ENCODE measurements at regions of chr10 and their contacts with region 1.

Region 1: DNA sequence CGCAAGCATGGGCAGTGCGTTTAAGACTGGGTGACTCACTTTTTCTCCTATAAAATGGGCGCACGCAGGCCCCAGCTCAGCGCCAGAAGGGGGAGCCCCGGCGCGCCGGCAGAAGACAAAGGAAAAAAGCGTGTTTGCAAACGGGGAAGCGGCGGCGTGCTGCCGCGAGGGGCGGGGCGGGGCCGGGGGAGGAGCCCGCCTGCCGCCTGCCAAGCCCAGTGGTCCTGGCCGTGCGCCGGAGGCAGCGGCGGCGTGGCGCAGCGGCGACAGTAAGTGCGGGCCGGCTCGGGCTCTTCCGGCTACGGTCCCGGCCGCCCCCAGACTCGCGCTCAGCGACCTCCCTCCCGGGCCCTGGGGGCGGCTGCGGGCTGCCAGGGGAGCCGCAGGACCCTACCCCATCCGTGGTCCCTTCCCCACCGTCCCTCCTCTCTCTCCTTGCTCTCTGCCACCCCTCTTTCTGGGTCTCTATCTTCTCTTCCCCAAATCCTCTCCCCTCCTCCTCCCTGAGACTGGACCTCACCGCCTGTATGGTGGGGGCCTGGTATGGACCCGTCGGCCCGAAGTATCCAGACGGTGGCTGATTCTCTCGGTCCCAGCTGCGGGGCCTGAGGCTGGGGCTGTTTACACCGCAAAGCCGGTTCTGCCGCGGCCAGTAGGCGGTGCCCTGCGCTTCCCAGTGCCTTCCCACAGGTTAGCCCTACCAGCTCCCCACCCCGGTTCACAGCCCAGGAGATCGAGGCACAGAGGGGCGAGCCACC is at the start of gene SLC29A3:
- DNase-seq: peak; percentile 74
- H3K4me3 ChIP-seq: peak within 1 kb of the TSS; percentile 50 to 57 (median 55)
- H3K27ac ChIP-seq: no peak within 1 kb of the TSS
- H3K4me1 ChIP-seq: peaks cover 6% of the 10 kb centered on the region
- H3K27me3 ChIP-seq: no peaks in the 10 kb centered on the region
- CTCF ChIP-seq: peak; percentile 54 to 90
- total RNA-seq, gene SLC29A3: 3.5 to 8.2 TPM

Region 2: DNA sequence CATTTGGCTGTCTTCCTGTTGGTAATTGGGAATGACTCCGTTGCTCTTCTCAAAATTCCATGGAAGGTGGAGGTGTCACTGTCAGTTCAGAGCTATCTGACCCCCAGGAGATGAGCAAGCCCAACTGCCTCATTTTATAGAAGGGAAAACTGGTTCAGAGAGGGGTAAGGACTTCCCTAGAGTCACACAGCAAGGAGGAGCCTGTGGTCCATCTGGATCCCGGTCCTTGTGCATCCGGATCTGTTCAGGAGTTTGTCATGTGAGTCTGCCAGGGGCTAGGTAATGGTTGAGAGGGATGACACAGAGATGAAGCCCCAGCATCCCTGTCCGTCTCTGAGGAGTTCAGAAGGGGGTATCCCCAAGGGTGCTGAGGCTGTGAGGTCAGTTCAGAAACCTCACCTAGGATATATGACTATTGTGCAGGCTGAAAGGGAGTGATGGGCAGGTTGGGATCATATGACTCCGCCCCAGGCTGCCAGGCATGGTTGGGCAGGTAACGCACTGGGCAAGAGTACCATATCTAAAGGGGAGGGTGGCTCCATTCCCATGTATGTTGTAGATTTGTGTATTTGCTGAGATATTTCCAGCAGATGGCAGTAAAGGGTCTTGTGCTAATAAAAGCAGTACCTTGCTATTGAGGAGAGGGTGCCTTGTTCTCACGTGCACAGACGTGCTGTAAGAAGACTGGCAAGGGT is 16.2 kb before region 1 on chr10:
- CTCF ChIA-PET with region 1: no interaction called
- dilution Hi-C with region 1: no loop called
- in situ Hi-C with region 1: no loop called
- intact Hi-C with region 1: no loop called
- DNase-seq: peak; percentile 48
- H3K4me3 ChIP-seq: no peak overlapping the region
- H3K27ac ChIP-seq: no peak overlapping the region
- H3K4me1 ChIP-seq: peaks cover 17% of the 10 kb centered on the region
- H3K27me3 ChIP-seq: no peaks in the 10 kb centered on the region
- CTCF ChIP-seq: peak; percentile 63 to 64

Region 3: GRCh38 chr10:71372882-71373495 is 53.8 kb after region 1 on chr10:
- CTCF ChIA-PET with region 1: no interaction called
- dilution Hi-C with region 1: no loop called
- in situ Hi-C with region 1: no loop called
- intact Hi-C with region 1: loop called (anchors 1 kb)
- DNase-seq: no peak
- H3K4me3 ChIP-seq: no peak overlapping the region
- H3K27ac ChIP-seq: no peak overlapping the region
- H3K4me1 ChIP-seq: peaks cover 10% of the 10 kb centered on the region
- H3K27me3 ChIP-seq: no peaks in the 10 kb centered on the region
- CTCF ChIP-seq: no peak

Region 4: DNA sequence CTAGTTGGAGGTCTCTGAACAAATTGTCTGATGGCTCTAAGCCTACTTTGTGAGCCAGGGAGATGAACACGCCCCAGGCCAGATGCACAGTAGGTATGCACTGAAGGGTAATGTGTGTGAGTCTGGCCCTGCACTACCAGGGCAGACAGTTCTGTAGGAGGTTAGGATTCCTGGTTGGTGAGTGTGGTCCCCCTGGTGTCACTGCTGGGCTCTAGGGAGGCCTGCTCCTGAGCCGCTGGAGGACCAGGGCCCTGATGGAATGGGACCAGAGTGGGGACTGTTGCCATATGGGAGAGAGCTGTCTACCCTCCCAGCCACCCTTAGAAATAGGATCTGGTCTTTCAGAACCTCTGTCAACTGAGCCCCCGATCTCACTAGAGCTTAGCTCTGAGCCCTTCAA is 119.5 kb after region 1 on chr10:
- CTCF ChIA-PET with region 1: interaction called, 16 read pairs
- dilution Hi-C with region 1: no loop called
- in situ Hi-C with region 1: no loop called
- intact Hi-C with region 1: no loop called
- DNase-seq: no peak
- H3K4me3 ChIP-seq: no peak overlapping the region
- H3K27ac ChIP-seq: no peak overlapping the region
- H3K4me1 ChIP-seq: no peaks in the 10 kb centered on the region
- H3K27me3 ChIP-seq: no peaks in the 10 kb centered on the region
- CTCF ChIP-seq: no peak

Region 5: DNA sequence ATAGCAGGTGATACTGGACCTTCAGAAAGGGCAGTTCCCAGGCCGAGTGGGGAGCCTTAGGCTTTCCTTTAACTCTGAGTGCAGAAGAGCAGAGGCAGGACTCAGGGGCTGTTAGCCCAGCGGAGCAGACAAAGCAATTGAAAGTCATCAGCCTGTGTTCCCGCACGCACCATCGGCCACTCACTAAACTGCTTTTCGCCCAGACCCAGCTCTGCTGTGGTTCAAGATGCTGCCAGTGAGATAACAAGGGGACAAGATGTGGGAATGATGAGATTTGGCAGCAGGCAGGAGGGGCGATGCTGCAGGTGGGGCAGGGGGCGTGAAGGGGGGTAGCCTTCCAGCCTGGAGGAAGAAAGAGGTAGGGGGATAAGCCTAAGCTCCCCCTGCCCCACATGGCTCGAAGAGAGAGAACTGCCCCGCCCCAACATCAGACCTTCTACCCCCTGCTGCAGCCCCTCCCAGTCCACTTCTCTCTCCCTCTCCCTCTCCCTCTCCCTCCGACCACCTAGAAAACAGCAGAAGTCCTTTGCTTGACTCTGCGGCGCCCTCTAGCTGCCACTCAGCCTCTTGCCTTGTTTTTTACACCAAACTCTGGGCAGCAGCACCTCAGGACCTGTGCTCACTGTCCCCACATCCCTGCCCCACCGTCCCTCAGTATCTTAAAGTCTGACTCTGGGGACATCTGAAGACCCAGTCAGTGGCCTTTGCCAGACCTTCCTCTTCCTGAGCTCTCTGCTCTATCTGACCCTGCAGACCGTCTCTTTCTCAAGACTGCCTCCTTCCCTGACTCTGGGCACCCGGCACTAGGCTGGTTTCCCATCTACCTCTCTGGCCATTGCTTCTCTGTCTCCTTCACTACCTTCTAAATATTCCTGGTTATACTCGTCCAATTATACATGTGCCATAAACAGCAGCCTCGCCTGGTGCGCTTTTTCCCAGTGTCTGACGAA is 289.9 kb after region 1 on chr10:
- CTCF ChIA-PET with region 1: interaction called, 4 read pairs
- dilution Hi-C with region 1: no loop called
- in situ Hi-C with region 1: loop called in 1 of 2 experiments (anchors 25 kb)
- intact Hi-C with region 1: loop called (anchors 1 kb)
- DNase-seq: peak; percentile 20
- H3K4me3 ChIP-seq: no peak overlapping the region
- H3K27ac ChIP-seq: no peak overlapping the region
- H3K4me1 ChIP-seq: no peaks in the 10 kb centered on the region
- H3K27me3 ChIP-seq: no peaks in the 10 kb centered on the region
- CTCF ChIP-seq: peak; percentile 86 to 87

Region 6: DNA sequence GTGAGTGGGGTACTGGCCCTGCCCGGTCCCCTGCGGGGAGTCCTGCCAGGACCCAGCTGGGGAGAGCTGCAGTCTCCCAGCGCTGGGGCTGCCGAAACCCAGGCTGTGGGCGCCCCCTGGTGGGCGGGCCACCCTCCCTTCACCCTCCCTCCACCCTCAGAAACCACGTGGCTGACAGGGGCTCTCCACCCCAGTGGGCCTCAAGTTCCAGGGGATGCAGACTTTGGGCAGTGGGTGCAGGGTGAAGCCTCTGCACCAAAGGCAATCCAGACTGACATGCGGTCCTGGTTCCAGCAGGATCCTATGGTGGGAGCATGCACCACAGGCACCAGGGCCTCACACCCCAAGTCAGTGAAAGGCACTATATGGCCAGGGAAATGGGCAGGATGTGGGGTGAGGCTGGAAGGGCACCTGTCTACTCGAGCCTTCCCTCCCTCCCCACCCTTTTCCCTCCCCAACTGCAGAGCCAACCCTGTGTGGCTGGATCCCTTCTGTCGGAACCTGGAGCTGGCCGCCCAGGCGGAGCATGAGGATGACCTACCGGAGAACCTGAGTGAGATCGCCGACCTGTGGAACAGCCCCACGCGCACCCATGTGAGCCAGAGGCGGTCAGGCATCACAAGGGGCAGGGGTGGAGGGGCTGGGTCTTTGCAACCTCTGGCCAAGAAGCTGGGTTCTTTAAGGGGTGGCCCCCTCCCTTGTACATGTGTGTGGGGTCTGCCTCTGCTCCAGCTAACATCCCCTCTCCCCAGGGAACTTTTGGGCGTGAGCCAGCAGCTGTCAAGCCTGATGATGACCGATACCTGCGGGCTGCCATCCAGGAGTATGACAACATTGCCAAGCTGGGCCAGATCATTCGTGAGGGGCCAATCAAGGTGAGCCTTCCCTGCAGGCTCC is 493.0 kb after region 1 on chr10:
- CTCF ChIA-PET with region 1: interaction called, 3 read pairs
- dilution Hi-C with region 1: no loop called
- in situ Hi-C with region 1: loop called (anchors 10 kb)
- intact Hi-C with region 1: loop called (anchors 2 kb)
- DNase-seq: peak; percentile 29
- H3K4me3 ChIP-seq: no peak overlapping the region
- H3K27ac ChIP-seq: no peak overlapping the region
- H3K4me1 ChIP-seq: no peaks in the 10 kb centered on the region
- H3K27me3 ChIP-seq: no peaks in the 10 kb centered on the region
- CTCF ChIP-seq: peak; percentile 64 to 88